ENCODE measurements at regions of chr3 and their contacts with region 1.

Region 1: GRCh38 chr3:27345492-27345891 is 23.7 kb downstream of the NEK10 start:
- DNase-seq: no peak
- ATAC-seq: peak; percentile 44 to 51
- H3K4me3 ChIP-seq: peak overlapping the region; percentile 4 to 38 (median 32)
- H3K27ac ChIP-seq: peak overlapping the region; percentile 75 to 83 (median 80)
- H3K4me1 ChIP-seq: peaks cover 20 to 24% of the 10 kb centered on the region in 2 donors
- H3K27me3 ChIP-seq: no peaks in the 10 kb centered on the region
- CTCF ChIP-seq: no peak
- POLR2A ChIP-seq: no peak

Region 2: GRCh38 chr3:27194494-27195458 is 150.7 kb before region 1 on chr3:
- in situ Hi-C with region 1: no loop called
- intact Hi-C with region 1: no loop called
- DNase-seq: no peak
- ATAC-seq: no peak
- H3K4me3 ChIP-seq: no peak overlapping the region
- H3K27ac ChIP-seq: peak overlapping the region in 1 of 4 donors; percentile 41
- H3K4me1 ChIP-seq: peaks cover 6 to 11% of the 10 kb centered on the region in 2 donors
- H3K27me3 ChIP-seq: no peaks in the 10 kb centered on the region
- CTCF ChIP-seq: no peak
- POLR2A ChIP-seq: no peak

Region 3: DNA sequence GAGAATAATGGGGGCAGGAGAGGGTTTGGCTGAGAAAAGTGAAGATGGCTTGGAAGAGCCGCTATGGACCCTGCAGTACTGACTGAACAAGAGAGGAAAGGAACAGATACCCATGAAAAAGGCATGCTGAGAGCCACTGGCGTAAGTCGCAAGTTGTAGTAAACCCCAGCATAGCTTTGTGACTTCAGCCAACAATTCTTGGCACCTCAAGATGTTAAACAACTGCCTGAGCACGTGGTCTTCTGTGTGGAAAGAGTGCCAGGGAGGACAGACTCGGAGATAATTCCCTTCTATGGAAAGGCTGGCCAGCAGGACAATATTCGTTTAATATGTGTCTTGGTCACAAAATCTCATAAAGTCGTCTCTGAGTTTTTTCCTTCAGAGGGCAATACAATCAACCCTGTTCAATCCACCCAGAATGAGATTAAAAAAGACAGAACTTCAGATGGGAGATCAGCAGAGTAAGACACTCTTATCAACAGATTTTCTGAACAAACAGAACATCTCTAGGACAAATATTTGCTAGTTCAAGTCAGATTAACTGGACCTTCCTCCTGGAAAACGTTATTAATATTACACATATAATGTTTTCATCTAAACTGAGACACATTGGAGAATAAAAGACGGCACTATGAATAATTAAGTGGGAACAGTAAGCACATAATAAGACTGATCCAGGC is 25.5 kb before region 1 on chr3:
- in situ Hi-C with region 1: no loop called
- intact Hi-C with region 1: loop called (anchors 2 kb)
- DNase-seq: peak; percentile 61 to 66
- ATAC-seq: peak; percentile 95
- H3K4me3 ChIP-seq: no peak overlapping the region
- H3K27ac ChIP-seq: peak overlapping the region; percentile 61 to 76 (median 72)
- H3K4me1 ChIP-seq: peaks cover 20 to 21% of the 10 kb centered on the region in 2 donors
- H3K27me3 ChIP-seq: no peaks in the 10 kb centered on the region
- CTCF ChIP-seq: no peak
- POLR2A ChIP-seq: no peak

Region 4: GRCh38 chr3:27326629-27327545 is 18.6 kb before region 1 on chr3:
- in situ Hi-C with region 1: no loop called
- intact Hi-C with region 1: loop called (anchors 2 kb)
- DNase-seq: peak; percentile 71 to 76
- ATAC-seq: peak; percentile 92 to 94
- H3K4me3 ChIP-seq: peak overlapping the region; percentile 3 to 20 (median 3)
- H3K27ac ChIP-seq: peak overlapping the region; percentile 82 to 85 (median 84)
- H3K4me1 ChIP-seq: peaks cover 28% of the 10 kb centered on the region in 2 donors
- H3K27me3 ChIP-seq: no peaks in the 10 kb centered on the region
- CTCF ChIP-seq: no peak
- POLR2A ChIP-seq: no peak

Region 5: GRCh38 chr3:27758083-27758482 is 412.6 kb after region 1 on chr3:
- in situ Hi-C with region 1: no loop called
- intact Hi-C with region 1: no loop called
- DNase-seq: peak in 1 of 2 donors; percentile 11
- ATAC-seq: peak; percentile 33 to 54
- H3K4me3 ChIP-seq: no peak overlapping the region
- H3K27ac ChIP-seq: no peak overlapping the region
- H3K4me1 ChIP-seq: no peaks in the 10 kb centered on the region
- H3K27me3 ChIP-seq: no peaks in the 10 kb centered on the region
- CTCF ChIP-seq: no peak
- POLR2A ChIP-seq: no peak

Measured in gastrocnemius medialis (tissue), 4 donors.